AG04450 (cell line): ENCODE measurements at regions of chr15 and their contacts with region 1.

Region 1: DNA sequence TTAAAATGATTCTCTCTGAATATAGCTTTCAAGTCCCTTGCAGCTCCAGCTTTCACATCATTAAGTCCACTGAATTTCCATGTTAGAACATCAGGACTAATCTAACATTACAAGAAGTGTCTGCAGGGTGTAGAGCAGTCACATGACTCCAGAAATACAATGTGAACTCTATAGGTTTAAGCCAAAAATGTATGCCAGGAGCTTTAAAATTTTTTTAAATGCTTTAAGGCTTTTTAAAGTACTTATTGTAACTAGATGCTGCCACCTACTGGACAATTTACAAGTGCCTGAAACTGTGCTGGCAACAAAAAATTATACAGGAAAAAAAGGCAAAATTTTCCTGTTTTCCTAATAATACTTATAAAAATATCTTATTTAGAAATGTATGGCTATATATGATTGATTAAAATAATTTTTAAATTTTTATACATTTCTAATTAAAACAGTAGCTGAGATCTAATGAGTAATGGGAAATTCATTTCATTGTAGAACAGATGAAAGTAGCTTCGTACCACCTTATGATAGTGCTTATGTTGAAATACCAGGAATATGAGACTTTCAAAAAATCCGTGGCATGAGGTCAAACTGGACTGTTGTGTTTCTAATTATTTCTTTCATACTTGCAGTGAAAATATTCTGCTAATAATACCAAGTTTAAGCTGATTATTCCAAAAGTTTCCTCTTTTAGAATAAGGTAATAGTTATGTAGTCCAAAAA is 25.7 kb downstream of the FSIP1 start:
- DNase-seq: peak; percentile 43
- H3K4me3 ChIP-seq: no peak overlapping the region
- H3K27ac ChIP-seq: no peak overlapping the region
- H3K27me3 ChIP-seq: no peaks in the 10 kb centered on the region
- CTCF ChIP-seq: peak; percentile 77

Region 2: DNA sequence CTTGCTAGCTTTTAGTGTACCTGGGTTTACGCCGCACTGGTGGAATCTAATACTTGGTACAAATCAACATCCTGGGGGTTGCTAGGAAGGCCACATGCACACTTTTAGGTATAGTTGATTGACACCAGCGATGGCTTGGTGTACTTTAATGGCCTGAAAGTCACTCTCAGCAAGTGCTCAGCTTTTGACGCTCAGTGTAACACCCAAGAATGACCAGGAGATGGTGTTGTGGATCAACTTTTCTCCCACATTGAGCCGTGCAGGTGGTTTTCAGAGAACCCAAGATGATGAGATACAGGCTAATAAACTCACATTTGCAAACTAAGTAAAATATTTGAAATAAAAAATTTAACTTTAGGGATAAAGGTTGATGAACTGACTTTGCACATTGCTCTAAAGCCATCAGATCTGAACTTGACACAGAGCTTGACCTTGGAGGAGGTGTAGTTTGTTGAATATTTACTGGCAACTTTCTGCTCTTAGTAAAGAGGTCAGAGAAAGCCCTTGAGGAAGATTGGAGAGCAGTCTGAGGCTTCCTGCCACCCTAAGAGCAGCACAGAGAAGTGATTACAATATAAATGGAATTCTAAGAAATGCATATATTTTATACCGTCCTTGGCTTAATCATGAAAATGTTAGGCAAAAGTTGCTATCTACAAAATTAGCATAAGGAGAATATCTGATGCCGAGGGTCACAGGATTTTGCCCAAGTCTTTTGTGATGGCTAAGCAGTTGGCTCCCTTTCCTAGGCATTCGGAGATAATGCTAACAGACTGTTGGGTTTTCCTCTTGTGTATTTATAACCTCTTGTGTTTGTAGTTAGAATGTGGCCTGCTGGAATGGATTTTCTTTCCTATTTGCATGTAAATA is 1048.9 kb before region 1 on chr15:
- CTCF ChIA-PET with region 1: interaction called, 18 read pairs
- POLR2A ChIA-PET with region 1: no interaction called
- DNase-seq: no peak
- H3K4me3 ChIP-seq: no peak overlapping the region
- H3K27ac ChIP-seq: no peak overlapping the region
- H3K27me3 ChIP-seq: no peaks in the 10 kb centered on the region
- CTCF ChIP-seq: peak; percentile 92

Region 3: DNA sequence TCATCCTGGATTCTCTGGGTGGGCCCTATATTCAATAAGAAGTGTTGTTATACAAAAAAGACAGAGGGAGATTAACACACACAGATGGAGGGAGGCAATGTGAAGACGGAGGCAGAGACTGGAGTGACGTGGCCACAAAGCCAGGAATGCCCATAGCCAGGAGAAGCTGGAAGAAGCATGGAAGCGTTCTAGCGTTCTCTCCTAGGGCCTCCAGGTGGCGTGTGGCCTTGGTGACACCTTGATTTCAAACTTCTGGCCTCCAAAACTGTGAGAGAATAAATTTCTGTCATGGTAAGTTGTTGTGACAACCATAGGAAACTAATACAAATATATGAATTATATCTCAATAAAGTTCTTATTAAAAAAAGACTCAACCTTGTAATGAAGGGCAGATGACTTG is 154.8 kb before region 1 on chr15:
- CTCF ChIA-PET with region 1: interaction called, 24 read pairs
- POLR2A ChIA-PET with region 1: interaction called, 6 read pairs
- DNase-seq: no peak
- H3K4me3 ChIP-seq: no peak overlapping the region
- H3K27ac ChIP-seq: no peak overlapping the region
- H3K27me3 ChIP-seq: no peaks in the 10 kb centered on the region
- CTCF ChIP-seq: 0 out of 2 replicates have a peak, but pooled peaks have one; percentile 12

Region 4: GRCh38 chr15:39680868-39681267 is 76.1 kb before region 1 on chr15:
- CTCF ChIA-PET with region 1: interaction called, 143 read pairs
- POLR2A ChIA-PET with region 1: no interaction called
- DNase-seq: no peak
- H3K4me3 ChIP-seq: no peak overlapping the region
- H3K27ac ChIP-seq: no peak overlapping the region
- H3K27me3 ChIP-seq: no peaks in the 10 kb centered on the region
- CTCF ChIP-seq: no peak

Region 5: GRCh38 chr15:39692356-39693327 is 64.3 kb before region 1 on chr15:
- CTCF ChIA-PET with region 1: interaction called, 143 read pairs
- POLR2A ChIA-PET with region 1: no interaction called
- DNase-seq: no peak
- H3K4me3 ChIP-seq: no peak overlapping the region
- H3K27ac ChIP-seq: no peak overlapping the region
- H3K27me3 ChIP-seq: no peaks in the 10 kb centered on the region
- CTCF ChIP-seq: no peak

Region 6: DNA sequence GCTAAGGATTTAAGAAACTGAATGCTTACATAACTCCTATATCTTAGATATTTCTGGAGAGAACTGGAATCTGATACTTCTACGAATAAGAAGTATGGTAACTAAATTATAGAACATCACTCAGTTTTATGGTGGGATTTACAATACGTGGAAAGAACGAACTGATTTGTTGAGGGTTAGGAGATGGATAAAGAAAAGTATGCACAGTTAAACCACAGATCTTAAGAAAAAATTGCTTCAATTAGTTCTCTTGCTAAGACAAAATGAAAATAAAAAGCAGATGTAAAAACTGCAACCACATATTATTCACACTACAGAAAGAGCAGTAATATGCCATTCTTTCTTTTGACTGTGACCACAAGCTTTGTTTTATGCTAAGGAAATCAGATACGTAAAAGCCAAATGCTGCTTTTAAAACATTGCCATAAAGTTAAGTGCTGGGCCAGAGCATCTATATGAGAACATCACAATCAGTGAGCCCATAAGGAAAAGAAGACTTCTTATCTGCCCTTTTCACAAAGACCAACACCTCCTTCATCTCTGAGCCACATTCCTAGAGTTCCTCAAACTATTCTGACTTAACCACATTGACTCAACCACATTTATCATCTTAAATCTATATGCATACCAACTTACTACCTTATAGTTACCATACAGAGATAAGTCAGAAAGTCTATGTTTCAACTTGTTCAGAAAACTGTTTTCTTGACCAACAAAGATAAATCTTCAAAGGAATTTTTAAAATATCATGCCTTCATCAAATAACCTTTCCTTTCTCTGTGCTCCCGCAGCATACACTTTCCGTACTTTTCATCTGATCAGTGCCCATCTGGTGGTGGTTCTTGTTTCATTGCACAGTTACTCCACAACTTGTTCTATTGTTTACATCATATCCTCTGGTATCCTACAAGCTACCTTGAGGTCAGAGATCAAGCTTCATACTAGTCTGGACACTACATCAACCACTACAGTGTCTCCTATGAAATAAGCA is 36.0 kb before region 1 on chr15:
- CTCF ChIA-PET with region 1: interaction called, 20 read pairs
- POLR2A ChIA-PET with region 1: no interaction called
- DNase-seq: peak; percentile 29
- H3K4me3 ChIP-seq: no peak overlapping the region
- H3K27ac ChIP-seq: no peak overlapping the region
- H3K27me3 ChIP-seq: no peaks in the 10 kb centered on the region
- CTCF ChIP-seq: no peak

Region 7: DNA sequence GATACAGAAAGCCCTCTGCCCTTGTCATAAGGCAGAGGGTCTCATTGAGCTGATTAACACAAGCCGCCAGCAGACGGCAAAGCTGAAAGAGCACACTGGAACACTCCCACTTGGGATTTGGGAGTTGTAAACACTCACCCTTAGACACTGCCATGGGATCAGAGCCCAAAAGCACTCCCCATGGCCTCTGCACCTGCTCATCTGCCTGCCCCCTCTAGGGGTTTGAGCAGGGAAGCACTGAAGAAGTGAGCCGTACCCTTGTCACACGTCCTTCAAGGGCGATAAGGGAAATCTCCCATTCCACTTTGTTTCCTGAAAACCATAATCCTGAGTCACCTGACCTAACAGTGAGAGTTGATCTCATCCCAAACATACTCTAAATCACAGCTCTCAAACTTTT is 11.0 kb after region 1 on chr15:
- CTCF ChIA-PET with region 1: interaction called, 30 read pairs
- POLR2A ChIA-PET with region 1: no interaction called
- DNase-seq: no peak
- H3K4me3 ChIP-seq: no peak overlapping the region
- H3K27ac ChIP-seq: no peak overlapping the region
- H3K27me3 ChIP-seq: no peaks in the 10 kb centered on the region
- CTCF ChIP-seq: no peak